ENCODE measurements at regions of chr7 and their contacts with region 1.

Region 1: DNA sequence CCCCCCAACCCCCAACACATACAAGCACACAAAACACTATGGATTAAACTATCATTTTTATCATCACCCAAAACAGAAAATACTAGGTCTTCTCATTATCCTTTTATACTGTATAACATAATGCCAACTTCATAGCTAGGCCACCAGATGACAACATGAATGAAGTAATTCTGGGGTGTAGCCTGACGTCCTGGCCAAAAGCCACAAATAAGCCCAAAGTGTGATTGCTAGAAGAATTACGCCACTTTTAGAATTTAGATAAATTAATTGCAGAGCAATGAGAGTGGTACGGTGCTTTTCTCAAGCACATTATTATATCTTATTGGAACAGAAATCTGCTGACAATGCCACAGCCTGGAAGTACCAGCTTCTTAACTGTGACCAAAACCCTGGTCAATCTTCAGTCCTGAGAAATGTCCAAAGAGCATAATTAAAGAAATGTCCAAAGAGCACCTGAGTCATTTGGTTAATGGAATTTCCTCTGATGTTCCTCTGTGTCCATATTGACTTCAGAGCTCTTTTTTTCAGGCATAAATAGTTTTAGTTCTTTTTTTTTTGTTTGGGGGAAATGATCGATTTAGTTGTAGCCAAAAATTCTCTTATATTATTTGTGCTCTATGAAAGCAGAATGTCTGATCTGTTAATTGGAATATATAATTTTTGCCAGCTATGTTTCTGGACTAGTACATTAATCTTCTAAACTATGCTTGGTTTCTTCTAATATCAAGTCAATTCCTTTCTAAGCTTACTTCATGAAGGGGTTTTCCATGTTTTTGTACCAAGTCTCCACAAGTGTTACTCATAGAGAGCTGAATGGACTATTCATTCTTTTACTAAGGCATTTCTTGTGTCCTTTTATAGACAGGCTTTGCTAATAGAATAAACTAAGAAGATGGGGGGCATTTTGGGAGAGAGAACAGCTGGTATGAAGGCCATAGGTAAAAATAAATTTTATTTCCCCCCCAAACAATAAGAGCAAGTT is 233.4 kb upstream of the SLC26A5 start:
- DNase-seq: no peak
- ATAC-seq: no peak
- H3K4me3 ChIP-seq: no peak overlapping the region
- H3K27ac ChIP-seq: no peak overlapping the region
- H3K4me1 ChIP-seq: no peaks in the 10 kb centered on the region
- H3K27me3 ChIP-seq: peaks cover 0 to 3% (median 0%) of the 10 kb centered on the region in 9 donors
- CTCF ChIP-seq: no peak
- POLR2A ChIP-seq: no peak

Region 2: GRCh38 chr7:103613655-103614642 is 65.5 kb before region 1 on chr7:
- intact Hi-C with region 1: loop called in 1 of 10 experiments (anchors 10 kb)
- DNase-seq: no peak
- ATAC-seq: peak in 2 of 4 donors; percentile 39 to 66
- H3K4me3 ChIP-seq: no peak overlapping the region
- H3K27ac ChIP-seq: no peak overlapping the region
- H3K4me1 ChIP-seq: peaks cover 0 to 12% (median 3%) of the 10 kb centered on the region in 12 donors
- H3K27me3 ChIP-seq: no peaks in the 10 kb centered on the region
- CTCF ChIP-seq: no peak
- POLR2A ChIP-seq: no peak

Region 3: DNA sequence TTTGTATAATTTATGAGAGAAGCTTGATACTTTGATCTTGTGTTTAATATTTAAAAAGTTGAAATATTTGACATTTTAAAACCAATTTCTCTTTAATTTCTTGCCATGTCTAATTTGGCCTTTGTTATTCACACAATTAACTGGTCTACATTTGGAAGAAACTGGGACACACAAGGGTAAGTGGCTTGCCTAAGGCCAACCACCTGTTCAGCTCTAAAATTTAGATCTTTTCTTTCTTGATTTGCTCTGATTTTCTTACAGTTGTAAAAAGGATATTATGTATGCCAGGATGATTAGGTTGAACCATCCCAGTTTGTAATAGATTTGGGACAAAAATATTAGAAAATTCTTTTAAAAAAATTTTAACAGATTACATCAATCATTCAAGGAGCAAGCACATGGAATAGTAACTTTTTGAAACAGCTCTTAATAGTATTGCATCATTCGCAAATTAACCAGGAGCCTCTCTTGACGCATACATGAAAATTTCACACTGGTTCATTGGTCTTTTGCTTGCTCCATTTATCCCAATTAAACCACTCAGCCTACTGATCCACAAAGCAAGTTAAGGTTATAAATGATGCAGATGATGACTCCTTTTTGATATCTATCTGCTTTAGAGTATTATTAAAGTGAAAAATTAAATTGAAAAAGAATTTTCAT is 11.0 kb before region 1 on chr7:
- intact Hi-C with region 1: no loop called
- DNase-seq: no peak
- ATAC-seq: no peak
- H3K4me3 ChIP-seq: no peak overlapping the region
- H3K27ac ChIP-seq: no peak overlapping the region
- H3K4me1 ChIP-seq: no peaks in the 10 kb centered on the region
- H3K27me3 ChIP-seq: no peaks in the 10 kb centered on the region
- CTCF ChIP-seq: no peak
- POLR2A ChIP-seq: no peak

Region 4: GRCh38 chr7:103735377-103735776 is 55.9 kb after region 1 on chr7:
- intact Hi-C with region 1: loop called in 1 of 10 experiments (anchors 10 kb)
- DNase-seq: no peak
- ATAC-seq: no peak
- H3K4me3 ChIP-seq: no peak overlapping the region
- H3K27ac ChIP-seq: no peak overlapping the region
- H3K4me1 ChIP-seq: no peaks in the 10 kb centered on the region
- H3K27me3 ChIP-seq: no peaks in the 10 kb centered on the region
- CTCF ChIP-seq: no peak
- POLR2A ChIP-seq: no peak

Region 5: GRCh38 chr7:103795107-103795506 is 115.7 kb after region 1 on chr7:
- intact Hi-C with region 1: no loop called
- DNase-seq: no peak
- ATAC-seq: no peak
- H3K4me3 ChIP-seq: no peak overlapping the region
- H3K27ac ChIP-seq: no peak overlapping the region
- H3K4me1 ChIP-seq: no peaks in the 10 kb centered on the region
- H3K27me3 ChIP-seq: no peaks in the 10 kb centered on the region
- CTCF ChIP-seq: no peak
- POLR2A ChIP-seq: no peak

Measured in heart left ventricle (tissue), 16 donors.